Panc1 (cell line): ENCODE measurements at regions of chr16 and their contacts with region 1.

Region 1: DNA sequence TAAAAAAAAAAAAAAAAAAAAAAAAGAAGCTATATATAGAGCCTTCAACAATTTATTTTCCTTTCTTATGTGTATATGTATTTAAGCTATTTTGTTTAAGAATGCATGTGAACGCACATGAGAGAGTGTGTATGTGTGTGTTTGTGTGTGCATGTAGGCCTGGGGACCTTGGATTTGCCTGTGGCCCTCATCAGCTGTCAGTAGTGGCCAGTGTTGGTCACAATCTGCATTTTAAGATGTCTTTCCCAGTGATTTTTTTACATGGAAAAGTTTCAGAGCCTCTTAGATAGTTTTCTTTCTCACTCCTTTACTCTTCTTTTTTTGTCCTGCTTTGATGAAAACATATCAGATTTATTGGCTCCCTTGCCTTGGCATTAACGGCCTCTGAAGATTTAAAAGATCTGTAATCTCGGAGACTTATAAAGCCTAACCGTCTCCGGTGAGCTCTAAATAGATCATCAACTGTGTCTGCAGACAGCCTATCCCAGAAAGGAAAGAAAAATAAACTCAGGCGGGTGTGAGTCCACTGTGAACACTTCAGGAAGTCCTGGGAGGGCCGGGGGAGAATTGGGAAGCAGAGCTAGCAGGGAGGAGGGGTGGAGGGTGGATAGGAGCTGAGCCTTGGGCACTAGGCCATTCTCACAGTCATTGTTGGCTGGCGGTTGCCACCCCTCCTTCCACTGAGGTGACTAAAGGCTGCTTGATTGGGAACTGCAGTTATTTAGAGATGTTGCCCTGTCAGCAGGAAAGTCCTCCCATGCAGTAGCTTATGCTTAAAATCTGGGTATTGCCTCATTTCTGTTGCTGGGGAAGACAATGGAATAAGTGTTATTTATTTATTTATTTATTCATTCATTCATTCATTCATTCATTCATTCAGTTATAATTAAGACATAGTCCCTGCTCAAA is 86.8 kb downstream of the WWP2 start:
- DNase-seq: no peak
- ATAC-seq: no peak
- H3K4me3 ChIP-seq: no peak overlapping the region
- H3K27ac ChIP-seq: no peak overlapping the region
- H3K4me1 ChIP-seq: no peaks in the 10 kb centered on the region
- H3K27me3 ChIP-seq: no peaks in the 10 kb centered on the region
- CTCF ChIP-seq: no peak

Region 2: GRCh38 chr16:68564367-68564985 is 1284.4 kb before region 1 on chr16:
- CTCF ChIA-PET with region 1: no interaction called
- POLR2A ChIA-PET with region 1: interaction called, 11 read pairs
- in situ Hi-C with region 1: no loop called
- intact Hi-C with region 1: no loop called
- DNase-seq: no peak
- ATAC-seq: no peak
- H3K4me3 ChIP-seq: no peak overlapping the region
- H3K27ac ChIP-seq: no peak overlapping the region
- H3K4me1 ChIP-seq: no peaks in the 10 kb centered on the region
- H3K27me3 ChIP-seq: no peaks in the 10 kb centered on the region
- CTCF ChIP-seq: no peak

Region 3: GRCh38 chr16:69865701-69866100 is 16.8 kb after region 1 on chr16:
- CTCF ChIA-PET with region 1: interaction called, 11 read pairs
- POLR2A ChIA-PET with region 1: no interaction called
- in situ Hi-C with region 1: no loop called
- intact Hi-C with region 1: no loop called
- DNase-seq: no peak
- ATAC-seq: no peak
- H3K4me3 ChIP-seq: no peak overlapping the region
- H3K27ac ChIP-seq: no peak overlapping the region
- H3K4me1 ChIP-seq: peaks cover 4% of the 10 kb centered on the region; the same call in 1 of the 2 replicates
- H3K27me3 ChIP-seq: no peaks in the 10 kb centered on the region
- CTCF ChIP-seq: no peak

Region 4: GRCh38 chr16:69917739-69918138 is 68.8 kb after region 1 on chr16:
- CTCF ChIA-PET with region 1: no interaction called
- POLR2A ChIA-PET with region 1: interaction called, 11 read pairs
- in situ Hi-C with region 1: no loop called
- intact Hi-C with region 1: no loop called
- DNase-seq: no peak
- ATAC-seq: peak; percentile 86
- H3K4me3 ChIP-seq: no peak overlapping the region
- H3K27ac ChIP-seq: no peak overlapping the region
- H3K4me1 ChIP-seq: peaks cover 7% of the 10 kb centered on the region
- H3K27me3 ChIP-seq: no peaks in the 10 kb centered on the region
- CTCF ChIP-seq: no peak